ENCODE measurements at regions of chr13 and their contacts with region 1.

Region 1: DNA sequence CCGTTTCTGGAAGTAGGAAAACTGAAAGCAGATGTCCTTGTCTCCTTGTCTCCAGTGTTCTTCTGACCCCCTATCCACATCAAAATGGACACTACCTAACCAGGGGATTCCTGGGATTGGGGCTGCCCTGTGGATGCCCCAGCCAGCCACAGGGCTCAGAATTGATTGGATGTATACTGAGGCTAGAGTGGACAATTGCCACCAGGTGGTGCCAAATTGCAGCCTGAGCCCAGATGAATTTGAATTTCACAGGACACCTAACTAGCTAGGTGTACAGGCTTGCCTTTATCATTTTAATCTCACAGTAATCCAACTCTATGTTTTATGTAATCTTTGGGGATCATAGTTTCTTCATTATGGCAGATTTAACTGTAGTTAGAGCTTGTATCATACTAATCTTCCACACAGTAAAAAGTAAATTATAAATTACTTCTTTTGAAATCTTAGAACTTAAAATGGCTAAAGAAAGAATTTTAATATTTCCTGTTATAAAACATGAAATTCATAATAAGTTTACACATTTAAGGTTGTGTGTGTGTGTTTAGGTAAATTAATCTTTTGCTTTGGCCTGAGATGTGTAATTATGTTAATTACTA is 58.0 kb downstream of the PIBF1 start:
- DNase-seq: peak in 1 of 10 donors; percentile 37
- H3K4me3 ChIP-seq: no peak overlapping the region
- H3K27ac ChIP-seq: no peak overlapping the region
- H3K27me3 ChIP-seq: no peaks in the 10 kb centered on the region
- CTCF ChIP-seq: peak in 54 of 56 donors; percentile 31 to 65 (median 50)

Region 2: GRCh38 chr13:72896869-72897268 is 56.9 kb after region 1 on chr13:
- intact Hi-C with region 1: no loop called
- DNase-seq: no peak
- H3K4me3 ChIP-seq: no peak overlapping the region
- H3K27ac ChIP-seq: no peak overlapping the region
- H3K27me3 ChIP-seq: no peaks in the 10 kb centered on the region
- CTCF ChIP-seq: no peak

Region 3: DNA sequence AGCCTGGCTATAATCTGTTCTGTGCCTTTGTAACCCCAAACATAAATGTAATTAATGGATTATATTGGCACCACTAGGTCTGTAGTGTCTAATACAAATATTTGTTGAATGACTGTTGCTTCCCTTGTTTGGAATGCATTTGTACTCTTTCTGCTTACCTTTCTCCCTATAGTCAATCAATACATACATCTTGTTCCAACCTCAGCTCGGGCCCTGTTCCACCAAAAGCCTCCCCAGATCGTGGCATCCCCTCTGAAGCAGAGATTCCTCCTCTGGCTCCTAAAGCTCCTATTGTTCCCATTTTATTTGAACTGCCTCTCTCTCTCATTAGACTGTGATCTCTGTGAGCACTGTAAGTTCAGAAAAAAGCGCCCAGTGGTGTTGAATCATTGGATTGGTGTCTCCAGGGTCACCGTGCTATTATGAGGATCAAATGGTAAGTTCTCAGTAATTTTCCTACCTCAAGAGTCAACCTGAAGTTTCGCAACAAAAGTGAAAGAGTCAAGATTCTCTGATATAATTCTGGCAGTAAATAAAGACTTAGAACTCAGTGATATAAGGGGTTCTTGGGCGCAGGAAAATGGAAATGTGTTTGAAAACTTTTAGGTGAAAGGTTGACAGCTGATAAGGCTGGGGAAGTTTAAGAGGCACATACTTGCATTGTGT is 370.4 kb after region 1 on chr13:
- intact Hi-C with region 1: no loop called
- DNase-seq: no peak
- H3K4me3 ChIP-seq: no peak overlapping the region
- H3K27ac ChIP-seq: no peak overlapping the region
- H3K27me3 ChIP-seq: peaks cover 0 to 5% (median 0%) of the 10 kb centered on the region in 45 donors
- CTCF ChIP-seq: no peak

Region 4: GRCh38 chr13:73708393-73708985 is 868.6 kb after region 1 on chr13:
- intact Hi-C with region 1: loop called in 1 of 2 experiments (anchors 10 kb)
- DNase-seq: peak in 4 of 10 donors; percentile 8 to 67 (median 24)
- H3K4me3 ChIP-seq: no peak overlapping the region
- H3K27ac ChIP-seq: no peak overlapping the region
- H3K27me3 ChIP-seq: no peaks in the 10 kb centered on the region
- CTCF ChIP-seq: peak; percentile 53 to 91 (median 76)